ENCODE measurements at regions of chr1 and their contacts with region 1.

Region 1: GRCh38 chr1:46718727-46719622 is at the start of gene EFCAB14:
- H3K4me3 Mint-ChIP-seq: peak within 1 kb of the TSS; percentile 85
- H3K27ac Mint-ChIP-seq: peak within 1 kb of the TSS; percentile 95
- H3K4me1 Mint-ChIP-seq: peaks cover 38% of the 10 kb centered on the region
- H3K27me3 Mint-ChIP-seq: no peaks in the 10 kb centered on the region

Region 2: DNA sequence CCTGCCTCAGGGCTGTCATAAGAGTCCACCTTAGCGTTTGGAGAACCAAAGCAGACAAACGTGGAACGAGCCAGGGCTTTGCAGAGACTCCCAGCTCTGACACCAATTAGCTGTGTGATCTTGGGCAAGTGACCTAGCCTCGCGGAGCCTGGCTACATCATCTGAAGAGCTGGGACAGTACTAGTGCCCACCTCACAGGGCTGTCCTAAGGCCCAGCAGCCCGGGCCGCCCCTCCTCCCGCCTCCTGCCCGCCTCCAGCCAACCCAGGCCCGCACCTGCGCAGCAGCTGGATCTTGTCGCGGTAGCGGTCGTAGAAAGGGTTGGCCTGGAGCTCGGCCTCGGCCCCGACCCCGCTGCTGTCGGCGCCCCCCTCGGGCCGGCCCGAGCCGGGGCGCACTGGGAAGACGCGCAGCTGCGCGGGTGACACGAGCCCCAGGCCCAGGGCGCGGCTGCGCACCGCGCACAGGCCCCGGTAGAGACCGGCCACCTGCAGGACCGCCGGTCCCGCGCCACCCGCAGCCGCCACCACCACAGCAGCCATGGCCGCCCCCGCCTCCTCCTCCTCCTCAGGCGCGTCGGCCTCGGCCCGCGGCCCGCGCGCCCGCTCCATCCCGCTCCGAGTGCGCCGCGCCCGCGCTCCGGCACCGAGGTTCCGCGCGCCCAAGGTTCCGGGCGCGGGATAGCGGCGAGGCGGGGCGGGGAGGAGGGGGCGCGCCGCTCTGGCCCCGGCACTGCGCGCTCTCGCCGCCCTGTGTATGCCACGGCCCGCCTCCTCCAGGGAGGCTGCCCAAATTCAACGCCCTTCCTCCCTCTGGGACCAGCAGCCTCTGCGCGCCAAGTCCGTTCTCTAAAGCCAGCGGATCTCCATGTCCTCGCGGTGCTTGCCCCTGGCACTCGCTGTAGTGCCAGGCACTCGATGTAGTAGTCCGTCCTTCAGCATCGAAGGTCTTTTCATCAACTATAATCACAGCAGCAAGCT is 50.9 kb before region 1 on chr1 and contains the start of gene ATPAF1:
- intact Hi-C with region 1: loop called (anchors 10 kb)
- H3K4me3 Mint-ChIP-seq: no peak within 1 kb of the TSS
- H3K27ac Mint-ChIP-seq: no peak within 1 kb of the TSS
- H3K4me1 Mint-ChIP-seq: peaks cover 18% of the 10 kb centered on the region
- H3K27me3 Mint-ChIP-seq: no peaks in the 10 kb centered on the region

Measured in dendritic cell treated with granulocyte-macrophage colony-stimulating factor and Interleukin-4, amounts not matched to agents 40 ng/mL and 50 ng/mL, for 4 days (primary cell).